ENCODE measurements at regions of chr14 and their contacts with region 1.

Region 1: GRCh38 chr14:103391048-103391447 is 5.8 kb downstream of the MARK3 start:
- DNase-seq: peak; percentile 48
- CTCF ChIP-seq: peak; percentile 52

Region 2: GRCh38 chr14:102993529-102993928 is 397.5 kb before region 1 on chr14:
- CTCF ChIA-PET with region 1: no interaction called
- POLR2A ChIA-PET with region 1: no interaction called
- DNase-seq: no peak
- CTCF ChIP-seq: no peak

Region 3: DNA sequence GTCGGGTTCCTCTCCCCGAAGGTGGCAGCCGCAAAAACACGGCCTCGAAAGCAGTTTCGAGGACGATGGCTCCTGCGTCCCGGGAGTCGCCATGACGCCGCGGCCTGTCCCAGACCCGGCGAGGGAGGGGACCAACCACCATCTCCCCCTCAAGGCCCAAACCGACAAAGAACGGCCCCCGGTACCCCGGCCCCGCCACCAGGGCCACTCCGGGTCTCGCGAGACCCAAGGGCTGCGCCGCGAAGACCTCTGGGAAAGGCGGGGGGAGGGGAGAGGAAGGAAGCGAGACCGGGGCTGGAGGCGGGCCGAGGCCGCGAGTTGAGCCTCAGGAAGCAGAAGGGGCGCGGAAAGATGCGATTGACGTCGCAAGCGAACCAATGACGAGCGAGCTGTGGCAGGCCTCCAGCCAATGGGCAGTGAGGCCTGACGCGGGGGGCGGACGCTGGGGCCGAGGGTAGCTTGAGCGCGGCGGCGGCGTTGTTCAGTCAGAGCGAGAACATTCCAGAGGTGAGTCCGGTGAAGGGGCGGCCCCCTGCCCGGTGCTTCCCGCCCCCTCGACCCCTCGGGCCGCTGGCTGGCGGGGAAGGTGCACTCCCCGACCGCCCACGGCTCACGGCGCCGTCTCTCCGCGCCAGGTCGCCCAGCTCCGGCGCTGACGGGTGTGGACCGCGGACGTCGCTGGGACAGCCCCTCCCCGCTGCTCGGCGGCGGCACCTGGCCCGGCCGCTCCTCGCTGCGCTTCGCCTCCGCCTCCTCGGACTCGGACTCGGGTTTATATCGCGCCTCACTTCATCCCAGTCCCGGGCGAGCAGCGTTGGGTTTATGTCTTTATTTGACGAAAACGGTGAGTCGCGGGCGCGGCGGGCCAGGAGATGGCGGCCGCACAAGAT is 57.0 kb before region 1 on chr14 and contains the start of gene EIF5:
- CTCF ChIA-PET with region 1: interaction called, 10 read pairs
- POLR2A ChIA-PET with region 1: interaction called, 3 read pairs
- DNase-seq: peak; percentile 97
- CTCF ChIP-seq: no peak

Region 4: DNA sequence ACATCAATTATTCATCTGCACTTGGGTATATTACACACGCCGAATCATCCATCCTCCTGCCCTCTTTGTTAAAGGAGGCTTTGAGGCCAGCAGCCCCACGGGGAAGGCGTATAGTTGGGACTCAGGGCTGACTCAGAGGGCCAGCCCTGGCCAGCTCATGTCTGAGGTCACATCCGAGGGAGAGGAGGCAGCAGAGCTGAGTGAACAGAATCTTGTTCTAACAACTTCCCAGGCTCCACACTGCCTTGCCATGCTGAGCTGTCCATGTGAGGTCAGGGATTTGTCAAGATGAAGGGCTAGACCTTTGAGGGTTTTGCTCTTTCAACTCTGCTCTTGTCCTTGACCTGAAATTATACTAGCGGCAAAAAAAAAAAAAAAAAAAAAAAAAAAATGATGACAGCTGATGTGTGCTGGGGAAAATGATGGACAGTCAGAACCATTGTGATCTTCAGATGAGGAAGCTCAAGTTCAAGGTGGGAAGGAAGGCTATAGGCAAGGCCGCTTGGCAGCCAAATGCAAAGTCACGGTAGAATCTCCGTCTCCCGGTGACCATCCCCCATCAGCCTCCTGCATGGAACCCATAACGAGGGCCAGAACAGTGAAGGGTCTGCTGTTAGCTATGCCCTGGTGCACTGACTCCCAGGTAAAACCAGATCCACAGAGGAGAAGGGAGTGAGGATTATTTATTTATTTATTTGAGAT is 18.3 kb before region 1 on chr14:
- CTCF ChIA-PET with region 1: interaction called, 41 read pairs
- POLR2A ChIA-PET with region 1: no interaction called
- DNase-seq: no peak
- CTCF ChIP-seq: no peak

Region 5: GRCh38 chr14:103401223-103402214 is 10.5 kb after region 1 on chr14:
- CTCF ChIA-PET with region 1: interaction called, 148 read pairs
- POLR2A ChIA-PET with region 1: interaction called, 4 read pairs
- DNase-seq: no peak
- CTCF ChIP-seq: no peak

Region 6: DNA sequence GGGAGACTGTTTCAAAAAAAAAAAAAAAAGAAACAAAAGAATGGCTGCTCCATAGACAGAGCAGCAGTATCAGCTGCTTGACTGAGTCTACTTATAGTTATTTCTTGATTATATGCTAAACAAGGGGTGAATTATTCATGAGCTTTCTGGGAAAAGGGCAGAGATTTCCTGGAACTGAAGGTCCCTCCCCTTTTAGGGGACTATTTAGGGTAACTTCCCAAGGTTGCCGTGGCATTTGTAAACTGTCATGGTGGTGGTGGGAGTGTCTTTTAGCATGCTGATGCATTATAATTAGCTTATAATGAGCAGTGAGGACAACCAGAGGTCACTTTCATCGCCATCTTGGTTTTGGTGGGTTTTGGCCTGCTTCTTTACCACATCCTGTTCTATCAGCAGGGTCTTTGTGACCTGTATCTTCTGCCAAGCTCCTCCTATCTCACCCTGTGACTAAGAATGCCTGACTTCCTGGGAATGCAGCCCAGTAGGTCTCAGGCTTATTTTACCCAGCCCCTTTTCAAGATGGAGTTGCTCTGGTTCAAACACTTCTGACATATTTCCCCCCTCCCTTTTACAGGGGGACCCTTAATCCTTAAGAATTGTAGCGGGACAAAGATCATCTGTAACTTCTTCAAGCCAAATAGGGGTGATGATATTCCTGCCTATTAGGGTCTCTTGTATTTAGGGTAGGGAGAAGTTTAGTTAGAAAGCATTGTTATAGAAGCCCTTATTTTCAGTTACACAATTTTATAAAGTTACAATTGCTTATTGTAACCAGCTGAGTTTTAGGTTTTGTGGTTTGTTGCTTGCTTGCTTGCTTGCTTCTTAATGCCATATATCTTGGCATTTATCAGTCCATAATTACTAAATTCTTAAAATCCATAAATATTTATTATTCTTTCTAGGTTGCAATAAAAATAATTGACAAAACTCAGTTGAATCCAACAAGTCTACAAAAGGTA is 36.7 kb after region 1 on chr14:
- CTCF ChIA-PET with region 1: interaction called, 16 read pairs
- POLR2A ChIA-PET with region 1: no interaction called
- DNase-seq: no peak
- CTCF ChIP-seq: no peak